HCT116 (cell line): ENCODE measurements at regions of chr1 and their contacts with region 1.

Region 1: DNA sequence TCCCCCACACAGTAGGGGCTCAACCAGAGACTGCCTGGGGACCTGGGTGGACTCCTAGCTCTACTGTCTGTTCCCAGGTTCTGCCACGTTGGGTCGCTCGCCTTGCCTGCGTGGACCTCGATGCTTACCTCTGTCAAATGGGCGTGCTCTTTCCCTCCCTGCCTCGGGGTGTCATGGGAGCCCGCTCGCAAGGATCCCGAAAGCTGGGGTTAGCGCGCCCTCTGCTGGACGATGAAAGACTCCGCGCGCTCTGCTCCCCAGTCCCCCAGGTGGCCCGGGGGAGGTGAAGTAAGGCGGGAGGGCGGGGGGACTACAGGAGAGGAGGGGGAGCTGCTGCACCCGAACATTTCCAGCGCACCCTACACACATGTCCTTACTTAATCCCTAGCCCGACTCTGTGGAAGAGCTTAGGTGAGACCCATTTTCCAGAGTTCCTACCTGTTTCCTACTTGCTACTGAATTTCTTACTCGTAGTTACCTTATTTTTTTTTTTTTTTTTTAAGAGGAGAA is 2.3 kb upstream of the BSND start:
- DNase-seq: peak; percentile 58
- ATAC-seq: peak; percentile 98
- H3K4me3 ChIP-seq: no peak overlapping the region
- H3K27ac ChIP-seq: no peak overlapping the region
- H3K4me1 ChIP-seq: peaks cover 0 to 8% of the 10 kb centered on the region in 2 experiments; a peak in 1 of 4 replicates
- H3K27me3 ChIP-seq: no peaks in the 10 kb centered on the region
- CTCF ChIP-seq: peak; percentile 77 to 97 (median 88)
- POLR2A ChIP-seq: no peak
- RAD21 ChIP-seq: peak; percentile 99

Region 2: DNA sequence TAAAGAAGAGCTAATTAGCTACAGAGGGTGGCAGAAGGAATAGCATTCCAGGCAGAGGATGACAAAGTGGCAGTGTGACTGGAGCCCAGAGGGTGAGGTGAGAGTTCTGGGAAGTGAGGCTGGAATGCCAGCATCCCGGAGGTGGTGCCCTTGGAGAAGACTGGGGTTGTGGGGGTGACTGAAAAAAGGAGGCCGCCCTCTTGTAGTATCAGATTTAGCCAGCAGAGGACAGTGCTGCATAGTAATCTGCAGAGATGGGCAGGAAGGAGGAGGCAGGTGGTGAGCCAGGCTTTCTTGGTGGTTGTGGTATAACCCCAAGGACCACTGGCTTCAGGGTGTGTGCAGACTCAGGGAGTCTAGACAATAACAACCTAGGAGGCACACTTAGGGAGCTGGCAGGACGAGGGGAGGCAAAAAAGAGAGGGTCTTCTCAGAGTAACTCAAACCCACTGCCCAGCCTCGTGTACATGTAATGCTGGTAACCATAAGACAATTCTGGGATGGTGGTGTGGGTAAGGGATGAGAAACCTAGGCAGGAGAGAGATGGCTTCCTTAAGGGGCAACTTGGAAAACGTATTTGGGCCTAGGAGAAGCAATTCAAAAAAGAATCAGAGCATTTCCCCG is 324.3 kb before region 1 on chr1:
- CTCF ChIA-PET with region 1: no interaction called
- POLR2A ChIA-PET with region 1: no interaction called
- RAD21 ChIA-PET with region 1: no interaction called
- intact Hi-C with region 1: loop called (anchors 1 kb)
- DNase-seq: peak; percentile 35
- ATAC-seq: peak; percentile 96
- H3K4me3 ChIP-seq: no peak overlapping the region
- H3K27ac ChIP-seq: no peak overlapping the region
- H3K4me1 ChIP-seq: no peaks in the 10 kb centered on the region
- H3K27me3 ChIP-seq: no peaks in the 10 kb centered on the region
- CTCF ChIP-seq: peak; percentile 80 to 88 (median 86)
- POLR2A ChIP-seq: no peak
- RAD21 ChIP-seq: peak; percentile 96

Region 3: DNA sequence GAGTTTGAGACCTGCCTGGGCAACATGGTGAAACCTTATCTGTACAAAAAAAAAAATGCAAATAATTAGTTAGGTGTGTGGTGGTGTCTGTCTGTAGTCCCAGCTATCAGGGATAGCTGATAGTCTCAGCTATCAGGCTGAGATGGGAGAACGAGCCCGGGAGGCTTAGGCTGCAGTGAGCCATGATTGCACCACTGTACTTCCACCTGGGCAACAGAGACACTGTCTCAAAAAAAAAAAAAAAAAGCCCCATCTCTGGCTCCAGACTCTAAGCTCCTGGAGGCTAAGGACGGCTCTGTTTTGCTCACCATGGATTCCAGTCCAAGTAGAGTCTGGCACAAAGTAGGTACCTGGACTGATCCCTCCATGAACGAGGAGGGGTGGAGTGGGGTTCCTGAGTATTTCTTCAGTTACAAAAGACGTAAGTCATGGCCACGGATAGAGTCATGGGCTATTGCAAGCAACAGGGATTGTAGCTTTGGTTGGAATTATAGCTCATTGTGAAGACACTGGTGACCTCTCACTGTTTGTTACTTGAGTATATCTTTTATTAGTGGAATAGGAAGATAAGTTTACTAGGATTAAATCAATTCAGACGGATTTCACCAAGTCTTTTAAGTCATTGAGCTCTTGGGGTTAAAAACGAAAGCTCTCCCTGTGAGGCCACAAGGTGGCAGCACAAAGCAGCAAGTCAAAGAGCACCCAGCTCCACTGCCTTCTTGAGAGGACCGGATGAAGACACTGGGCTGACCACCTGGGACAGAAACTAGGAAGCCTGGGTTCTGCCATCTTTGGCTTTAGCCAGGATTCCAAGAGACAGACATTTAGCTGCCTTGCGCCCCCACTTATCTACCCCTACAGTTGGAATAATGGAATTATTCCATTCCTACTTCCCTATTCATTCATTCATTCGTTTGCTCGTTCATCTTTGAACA is 51.5 kb before region 1 on chr1:
- CTCF ChIA-PET with region 1: interaction called, 85 read pairs
- POLR2A ChIA-PET with region 1: interaction called, 3 read pairs
- RAD21 ChIA-PET with region 1: interaction called, 20 to 25 read pairs
- intact Hi-C with region 1: loop called (anchors 1 kb)
- DNase-seq: peak; percentile 83
- ATAC-seq: peak; percentile 95
- H3K4me3 ChIP-seq: peak overlapping the region; percentile 15 to 45; a peak in 3 of 4 replicates
- H3K27ac ChIP-seq: no peak overlapping the region
- H3K4me1 ChIP-seq: peaks cover 3 to 8% of the 10 kb centered on the region in 2 experiments; a peak in 3 of 4 replicates
- H3K27me3 ChIP-seq: no peaks in the 10 kb centered on the region
- CTCF ChIP-seq: peak; percentile 86 to 96 (median 89)
- POLR2A ChIP-seq: no peak
- RAD21 ChIP-seq: peak; percentile 92

Region 4: GRCh38 chr1:54950369-54951163 is 45.8 kb before region 1 on chr1:
- CTCF ChIA-PET with region 1: interaction called, 85 read pairs
- POLR2A ChIA-PET with region 1: no interaction called
- RAD21 ChIA-PET with region 1: interaction called, 20 to 25 read pairs
- intact Hi-C with region 1: loop called (anchors 1 kb)
- DNase-seq: peak; percentile 60
- ATAC-seq: peak; percentile 84
- H3K4me3 ChIP-seq: peak overlapping the region in 1 of 2 experiments; percentile 8; a peak in 1 of 4 replicates
- H3K27ac ChIP-seq: no peak overlapping the region; the same call in 1 of the 2 replicates
- H3K4me1 ChIP-seq: peaks cover 6 to 31% of the 10 kb centered on the region in 2 experiments
- H3K27me3 ChIP-seq: no peaks in the 10 kb centered on the region
- CTCF ChIP-seq: peak; percentile 68 to 95 (median 74)
- POLR2A ChIP-seq: no peak
- RAD21 ChIP-seq: peak; percentile 97

Region 5: DNA sequence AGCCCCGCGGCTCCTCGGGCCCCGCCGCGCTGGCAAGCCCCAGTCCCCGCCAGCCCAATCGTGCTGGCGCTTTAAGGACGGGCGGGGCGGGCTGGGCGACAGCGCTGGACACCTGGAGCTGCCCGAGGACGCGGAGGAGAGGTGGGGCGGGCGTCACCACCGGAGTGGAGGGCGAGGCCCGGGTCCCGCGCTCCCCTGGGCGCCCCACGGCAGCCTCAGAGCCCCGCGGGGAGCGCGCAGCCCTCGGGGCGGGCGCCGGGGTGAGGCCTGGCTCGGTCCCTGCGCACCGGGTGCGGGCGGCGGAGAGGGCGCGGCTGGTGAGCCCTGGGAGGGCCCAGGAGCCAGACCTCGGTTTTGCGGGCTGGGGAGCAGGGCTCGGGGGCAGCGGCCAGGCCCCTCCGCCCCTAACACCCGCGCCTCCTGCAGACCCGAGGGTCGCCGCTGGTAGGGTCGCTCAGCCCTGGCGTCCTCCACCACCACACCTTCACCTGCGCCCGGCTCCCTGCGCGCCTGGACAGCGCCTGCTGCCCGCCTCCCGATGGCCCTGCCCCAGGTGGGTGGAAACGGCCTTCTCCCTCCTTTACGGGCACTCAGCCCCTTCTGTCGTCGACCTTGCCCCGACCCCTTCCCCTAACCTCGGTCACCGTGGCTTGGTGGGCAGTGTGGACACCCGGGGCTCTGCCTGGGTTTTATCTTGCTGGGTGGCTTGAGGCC is 15.7 kb before region 1 on chr1 and contains the start of gene TMEM61:
- CTCF ChIA-PET with region 1: no interaction called
- POLR2A ChIA-PET with region 1: no interaction called
- RAD21 ChIA-PET with region 1: no interaction called
- intact Hi-C with region 1: no loop called
- DNase-seq: no peak
- ATAC-seq: peak; percentile 82
- H3K4me3 ChIP-seq: peak within 1 kb of the TSS; percentile 48 to 62
- H3K27ac ChIP-seq: peak within 1 kb of the TSS; percentile 41; the same call in 1 of the 2 replicates
- H3K4me1 ChIP-seq: peaks cover 0 to 26% of the 10 kb centered on the region in 2 experiments; a peak in 2 of 4 replicates
- H3K27me3 ChIP-seq: no peaks in the 10 kb centered on the region
- CTCF ChIP-seq: no peak
- POLR2A ChIP-seq: no peak
- RAD21 ChIP-seq: no peak
- total RNA-seq, gene TMEM61: 4.4 TPM

Region 6: DNA sequence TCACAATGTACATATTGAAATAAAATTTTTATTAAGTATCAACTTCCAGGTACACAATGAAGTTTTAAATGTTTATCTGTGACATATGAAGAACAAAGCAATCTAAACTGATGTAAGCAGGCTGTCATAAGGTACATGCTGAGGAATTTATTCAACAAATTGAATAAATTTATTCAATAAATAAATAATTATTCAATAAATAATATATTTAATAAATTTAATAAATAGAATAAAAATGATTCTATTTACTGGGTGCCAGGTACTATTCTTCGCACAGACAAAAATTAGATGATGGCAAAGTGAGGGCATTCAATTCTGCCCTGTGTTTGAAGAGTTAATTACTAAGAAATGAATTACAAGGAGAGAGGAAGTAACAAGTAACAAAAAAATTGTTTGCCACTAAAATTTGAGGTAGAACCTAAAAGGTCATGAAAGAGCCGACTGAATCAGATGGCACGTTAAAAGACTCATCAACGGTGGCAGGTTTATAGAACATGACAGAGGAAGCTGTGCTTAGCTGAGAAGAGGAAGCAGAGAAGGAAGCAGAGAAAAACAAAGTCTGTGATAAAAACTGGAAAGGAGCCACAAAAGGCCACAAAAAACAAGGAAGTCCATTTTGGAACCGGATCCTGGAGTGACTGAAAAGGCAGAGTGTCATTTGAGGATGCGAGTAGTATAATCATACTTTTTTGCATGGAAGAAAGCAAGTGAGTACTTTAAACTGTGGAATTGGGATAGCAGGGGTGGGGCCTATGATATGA is 221.0 kb after region 1 on chr1:
- CTCF ChIA-PET with region 1: no interaction called
- POLR2A ChIA-PET with region 1: no interaction called
- RAD21 ChIA-PET with region 1: no interaction called
- intact Hi-C with region 1: no loop called
- DNase-seq: no peak
- ATAC-seq: no peak
- H3K4me3 ChIP-seq: no peak overlapping the region
- H3K27ac ChIP-seq: no peak overlapping the region
- H3K4me1 ChIP-seq: peaks cover 13 to 32% of the 10 kb centered on the region in 2 experiments
- H3K27me3 ChIP-seq: no peaks in the 10 kb centered on the region
- CTCF ChIP-seq: no peak
- POLR2A ChIP-seq: no peak
- RAD21 ChIP-seq: no peak